CD14-positive monocyte (primary cell): ENCODE measurements at regions of chr11 and their contacts with region 1.

Region 1: GRCh38 chr11:118145285-118146227 is 7.1 kb downstream of the SCN4B start:
- DNase-seq: peak; percentile 64 to 78 (median 73)
- H3K4me3 ChIP-seq: peak overlapping the region; percentile 62 to 84 (median 68)
- H3K4me3 Mint-ChIP-seq: peak overlapping the region; percentile 80 to 86
- H3K27ac ChIP-seq: no peak overlapping the region
- H3K27ac Mint-ChIP-seq: peak overlapping the region in 1 of 7 donors; percentile 10
- H3K4me1 ChIP-seq: peaks cover 34 to 48% of the 10 kb centered on the region in 2 donors
- H3K4me1 Mint-ChIP-seq: peaks cover 48% of the 10 kb centered on the region
- H3K27me3 ChIP-seq: peaks cover 0 to 8% of the 10 kb centered on the region in 2 donors
- H3K27me3 Mint-ChIP-seq: peaks cover 9 to 17% (median 12%) of the 10 kb centered on the region in 3 donors
- CTCF ChIP-seq: peak; percentile 88

Region 2: GRCh38 chr11:118088477-118088920 is 57.1 kb before region 1 on chr11:
- intact Hi-C with region 1: loop called (anchors 2 kb)
- DNase-seq: peak; percentile 92 to 94 (median 93)
- H3K4me3 ChIP-seq: peak overlapping the region in 1 of 3 experiments; percentile 35
- H3K4me3 Mint-ChIP-seq: peak overlapping the region; percentile 60 to 63
- H3K27ac ChIP-seq: peak overlapping the region; percentile 73 to 92
- H3K27ac Mint-ChIP-seq: peak overlapping the region; percentile 96 to 99 (median 96)
- H3K4me1 ChIP-seq: peaks cover 50 to 59% of the 10 kb centered on the region in 2 donors
- H3K4me1 Mint-ChIP-seq: peaks cover 52% of the 10 kb centered on the region
- H3K27me3 ChIP-seq: no peaks in the 10 kb centered on the region
- H3K27me3 Mint-ChIP-seq: peaks cover 0 to 11% (median 3%) of the 10 kb centered on the region in 3 donors
- CTCF ChIP-seq: no peak

Region 3: DNA sequence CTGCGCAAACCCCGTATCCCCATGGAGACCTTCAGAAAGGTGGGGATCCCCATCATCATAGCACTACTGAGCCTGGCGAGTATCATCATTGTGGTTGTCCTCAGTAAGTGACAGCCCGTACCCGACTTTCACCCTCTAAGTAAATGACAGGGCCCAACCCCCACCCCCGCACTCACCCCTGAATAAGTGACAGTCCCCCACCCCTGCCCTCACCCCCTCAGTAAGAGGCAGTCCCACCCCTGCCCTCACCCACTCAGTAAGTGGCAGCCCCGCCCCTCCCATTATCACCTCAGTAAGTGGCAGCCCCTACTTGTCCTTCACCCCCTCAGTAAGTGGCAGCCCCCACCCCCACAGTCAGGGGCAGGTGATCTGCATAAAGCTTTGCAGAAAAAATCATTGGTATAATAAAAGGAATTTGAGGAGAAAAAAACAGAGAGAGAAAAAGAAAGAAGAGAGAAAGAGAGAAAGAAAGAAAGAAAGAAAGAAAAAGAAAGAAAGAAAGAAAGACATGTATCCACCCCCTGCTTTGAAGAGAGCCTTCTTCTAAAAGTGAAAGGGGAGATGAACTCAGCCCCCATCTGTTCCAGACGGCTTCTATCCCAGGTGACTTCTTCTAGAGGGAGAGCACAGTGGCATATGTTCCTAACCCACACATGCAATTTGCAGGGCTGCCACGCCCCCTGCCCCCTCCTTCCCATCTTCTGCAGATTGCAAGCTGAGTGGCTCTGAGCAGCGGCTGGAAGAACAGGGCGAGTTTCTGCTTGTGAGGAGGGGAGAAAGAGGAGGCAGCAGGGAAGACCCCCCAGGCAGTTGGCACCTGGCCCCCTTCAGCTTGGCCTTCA is 46.3 kb before region 1 on chr11:
- intact Hi-C with region 1: no loop called
- DNase-seq: no peak
- H3K4me3 ChIP-seq: no peak overlapping the region
- H3K4me3 Mint-ChIP-seq: no peak overlapping the region
- H3K27ac ChIP-seq: no peak overlapping the region
- H3K27ac Mint-ChIP-seq: no peak overlapping the region
- H3K4me1 ChIP-seq: no peaks in the 10 kb centered on the region
- H3K4me1 Mint-ChIP-seq: peaks cover 10% of the 10 kb centered on the region
- H3K27me3 ChIP-seq: no peaks in the 10 kb centered on the region
- H3K27me3 Mint-ChIP-seq: peaks cover 0 to 6% (median 2%) of the 10 kb centered on the region in 3 donors
- CTCF ChIP-seq: no peak

Region 4: DNA sequence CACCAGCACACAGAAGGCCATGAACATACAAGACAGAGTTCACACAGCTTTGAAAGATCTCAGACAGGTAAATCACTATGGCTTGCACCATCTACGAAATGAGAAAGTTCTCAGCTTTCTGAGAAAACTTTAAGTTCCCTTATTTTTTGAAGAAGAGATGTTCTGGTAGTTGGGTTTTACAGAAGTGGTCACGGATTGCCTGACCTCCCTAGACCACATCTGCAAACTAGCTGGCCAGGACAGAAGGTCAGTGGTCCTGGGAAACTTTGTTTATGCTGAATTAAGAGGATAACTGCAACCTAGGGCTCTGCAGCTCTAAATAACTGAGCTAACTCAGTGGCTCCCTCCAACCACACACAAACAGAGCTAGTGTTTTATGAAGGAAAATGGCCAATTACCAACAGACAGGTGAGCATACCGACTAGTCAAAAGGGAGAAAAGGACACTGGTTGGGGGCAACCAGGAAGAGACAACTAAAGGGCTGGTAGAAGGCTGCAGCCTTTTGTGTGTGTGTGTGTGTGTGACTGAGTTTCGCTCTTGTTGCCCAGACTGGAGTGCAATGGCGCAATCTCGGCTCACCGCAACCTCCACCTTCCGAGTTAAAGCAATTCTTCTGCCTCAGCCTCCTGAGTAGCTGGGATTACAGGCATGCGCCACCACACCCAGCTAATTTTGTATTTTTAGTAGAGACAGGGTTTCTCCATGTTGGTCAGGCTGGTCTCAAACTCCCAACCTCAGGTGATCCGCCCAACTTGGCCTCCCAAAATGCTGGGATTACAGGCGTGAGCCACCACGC is 39.4 kb after region 1 on chr11:
- intact Hi-C with region 1: loop called in 1 of 2 experiments (anchors 5 kb)
- DNase-seq: peak; percentile 71 to 82 (median 79)
- H3K4me3 ChIP-seq: peak overlapping the region in 1 of 3 experiments; percentile 57
- H3K4me3 Mint-ChIP-seq: peak overlapping the region; percentile 12 to 80
- H3K27ac ChIP-seq: peak overlapping the region; percentile 60 to 87
- H3K27ac Mint-ChIP-seq: peak overlapping the region; percentile 83 to 97 (median 93)
- H3K4me1 ChIP-seq: peaks cover 73 to 78% of the 10 kb centered on the region in 2 donors
- H3K4me1 Mint-ChIP-seq: peaks cover 74% of the 10 kb centered on the region
- H3K27me3 ChIP-seq: no peaks in the 10 kb centered on the region
- H3K27me3 Mint-ChIP-seq: peaks cover 0 to 5% (median under 1%) of the 10 kb centered on the region in 3 donors
- CTCF ChIP-seq: no peak

Region 5: GRCh38 chr11:118353084-118353710 is 207.6 kb after region 1 on chr11:
- intact Hi-C with region 1: loop called (anchors 5 kb)
- DNase-seq: peak; percentile 6 to 29 (median 19)
- H3K4me3 ChIP-seq: no peak overlapping the region
- H3K4me3 Mint-ChIP-seq: no peak overlapping the region
- H3K27ac ChIP-seq: no peak overlapping the region
- H3K27ac Mint-ChIP-seq: no peak overlapping the region
- H3K4me1 ChIP-seq: peaks cover 3 to 5% of the 10 kb centered on the region in 2 donors
- H3K4me1 Mint-ChIP-seq: peaks cover 8% of the 10 kb centered on the region
- H3K27me3 ChIP-seq: peaks cover 2 to 6% of the 10 kb centered on the region in 2 donors
- H3K27me3 Mint-ChIP-seq: peaks cover 4 to 10% (median 9%) of the 10 kb centered on the region in 3 donors
- CTCF ChIP-seq: peak; percentile 80

Region 6: GRCh38 chr11:118488480-118489109 is 343.0 kb after region 1 on chr11:
- intact Hi-C with region 1: loop called (anchors 2 to 10 kb)
- DNase-seq: peak; percentile 58 to 67 (median 61)
- H3K4me3 ChIP-seq: no peak overlapping the region
- H3K4me3 Mint-ChIP-seq: no peak overlapping the region
- H3K27ac ChIP-seq: no peak overlapping the region
- H3K27ac Mint-ChIP-seq: peak overlapping the region in 1 of 7 donors; percentile 6
- H3K4me1 ChIP-seq: no peaks in the 10 kb centered on the region
- H3K4me1 Mint-ChIP-seq: no peaks in the 10 kb centered on the region
- H3K27me3 ChIP-seq: no peaks in the 10 kb centered on the region
- H3K27me3 Mint-ChIP-seq: no peaks in the 10 kb centered on the region
- CTCF ChIP-seq: peak; percentile 82